Colonic mucosa (tissue), 4 donors: ENCODE measurements at regions of chr9 and their contacts with region 1.

Region 1: GRCh38 chr9:89000973-89001916 is 10.0 kb downstream of the S1PR3 start:
- DNase-seq: peak; percentile 89
- H3K4me3 ChIP-seq: no peak overlapping the region
- H3K27ac ChIP-seq: no peak overlapping the region
- H3K4me1 ChIP-seq: no peaks in the 10 kb centered on the region
- H3K27me3 ChIP-seq: no peaks in the 10 kb centered on the region
- CTCF ChIP-seq: peak; percentile 76

Region 2: GRCh38 chr9:88593537-88594185 is 407.6 kb before region 1 on chr9:
- intact Hi-C with region 1: loop called (anchors 2 kb)
- DNase-seq: peak; percentile 59
- H3K4me3 ChIP-seq: no peak overlapping the region
- H3K27ac ChIP-seq: no peak overlapping the region
- H3K4me1 ChIP-seq: no peaks in the 10 kb centered on the region
- H3K27me3 ChIP-seq: no peaks in the 10 kb centered on the region
- CTCF ChIP-seq: peak; percentile 51

Region 3: GRCh38 chr9:88706193-88707118 is 294.8 kb before region 1 on chr9:
- intact Hi-C with region 1: no loop called
- DNase-seq: no peak
- H3K4me3 ChIP-seq: no peak overlapping the region
- H3K27ac ChIP-seq: no peak overlapping the region
- H3K4me1 ChIP-seq: no peaks in the 10 kb centered on the region
- H3K27me3 ChIP-seq: no peaks in the 10 kb centered on the region
- CTCF ChIP-seq: no peak